Breast epithelium (tissue), 4 donors: ENCODE measurements at regions of chr5 and their contacts with region 1.

Region 1: DNA sequence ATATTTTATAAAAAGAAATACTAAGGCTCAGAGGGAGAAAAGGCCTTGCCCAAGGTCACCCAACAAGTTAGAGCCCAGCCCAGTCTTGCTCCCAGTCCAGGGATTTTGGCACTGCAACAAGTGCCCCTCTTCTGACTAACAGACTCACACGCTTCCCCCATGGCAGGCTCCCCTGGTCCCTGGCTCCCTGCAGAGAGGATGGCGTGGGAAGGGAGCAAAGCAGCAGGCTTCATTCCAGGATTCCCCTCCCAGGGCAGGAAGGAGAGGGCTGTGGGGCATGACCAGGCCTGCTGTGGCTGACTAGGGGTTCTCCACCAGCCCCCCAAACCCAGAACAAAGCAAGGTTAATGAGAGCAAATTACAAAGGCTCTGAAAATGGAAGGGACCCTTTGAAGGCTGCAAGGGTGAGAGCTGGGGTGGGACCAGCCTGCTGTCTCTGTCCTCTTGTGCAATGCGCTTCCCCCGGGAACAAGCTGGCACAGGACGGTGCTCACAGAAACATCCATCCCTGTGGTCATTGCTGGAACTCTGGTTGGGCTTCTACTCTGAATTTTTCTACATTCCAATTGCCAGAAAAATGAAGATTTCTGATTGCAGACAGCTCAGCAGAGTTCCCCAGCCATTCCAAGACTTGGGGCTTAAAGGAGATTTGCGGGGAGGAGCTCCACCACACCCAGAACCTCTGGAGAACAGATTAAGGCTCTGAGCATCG is 37.1 kb upstream of the FAT2 start:
- DNase-seq: peak in 1 of 2 donors; percentile 72
- H3K4me3 ChIP-seq: no peak overlapping the region
- H3K27ac ChIP-seq: peak overlapping the region; percentile 60 to 66
- H3K4me1 ChIP-seq: no peaks in the 10 kb centered on the region
- H3K27me3 ChIP-seq: no peaks in the 10 kb centered on the region
- CTCF ChIP-seq: no peak
- POLR2A ChIP-seq: no peak

Region 2: GRCh38 chr5:151470439-151470838 is 157.8 kb before region 1 on chr5:
- intact Hi-C with region 1: no loop called
- DNase-seq: no peak
- H3K4me3 ChIP-seq: no peak overlapping the region
- H3K27ac ChIP-seq: no peak overlapping the region
- H3K4me1 ChIP-seq: no peaks in the 10 kb centered on the region
- H3K27me3 ChIP-seq: no peaks in the 10 kb centered on the region
- CTCF ChIP-seq: no peak
- POLR2A ChIP-seq: no peak

Region 3: DNA sequence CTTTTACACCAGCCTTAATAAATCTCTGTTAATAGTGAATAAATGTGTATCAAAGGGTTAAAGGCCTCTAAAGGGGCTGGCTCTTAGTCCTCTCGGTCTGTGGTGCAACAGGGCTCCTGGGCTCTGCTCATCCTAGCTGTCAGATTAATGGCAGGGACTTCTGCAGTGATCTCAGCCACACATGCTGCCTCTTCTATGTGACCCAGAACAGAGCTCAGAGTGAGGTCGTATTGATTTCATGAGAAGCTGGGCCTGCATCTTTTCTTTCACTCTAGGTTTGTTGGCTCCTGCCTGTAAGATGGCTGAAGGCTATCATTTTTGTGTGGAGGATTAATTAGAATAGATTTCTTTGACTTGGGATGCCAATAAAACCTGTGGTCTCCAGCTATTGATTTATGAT is 461.4 kb after region 1 on chr5:
- intact Hi-C with region 1: loop called (anchors 5 kb)
- DNase-seq: no peak
- H3K4me3 ChIP-seq: no peak overlapping the region
- H3K27ac ChIP-seq: no peak overlapping the region
- H3K4me1 ChIP-seq: no peaks in the 10 kb centered on the region
- H3K27me3 ChIP-seq: no peaks in the 10 kb centered on the region
- CTCF ChIP-seq: no peak
- POLR2A ChIP-seq: no peak